Panc1 (cell line): ENCODE measurements at regions of chr5 and their contacts with region 1.

Region 1: GRCh38 chr5:179818746-179819295 is 1.9 kb upstream of the SQSTM1 start:
- DNase-seq: peak; percentile 82
- ATAC-seq: peak; percentile 73
- H3K4me3 ChIP-seq: peak overlapping the region; percentile 11 to 33; a peak in 2 of 4 replicates
- H3K27ac ChIP-seq: peak overlapping the region; percentile 99
- H3K4me1 ChIP-seq: peaks cover 41% of the 10 kb centered on the region
- H3K27me3 ChIP-seq: no peaks in the 10 kb centered on the region
- CTCF ChIP-seq: no peak

Region 2: DNA sequence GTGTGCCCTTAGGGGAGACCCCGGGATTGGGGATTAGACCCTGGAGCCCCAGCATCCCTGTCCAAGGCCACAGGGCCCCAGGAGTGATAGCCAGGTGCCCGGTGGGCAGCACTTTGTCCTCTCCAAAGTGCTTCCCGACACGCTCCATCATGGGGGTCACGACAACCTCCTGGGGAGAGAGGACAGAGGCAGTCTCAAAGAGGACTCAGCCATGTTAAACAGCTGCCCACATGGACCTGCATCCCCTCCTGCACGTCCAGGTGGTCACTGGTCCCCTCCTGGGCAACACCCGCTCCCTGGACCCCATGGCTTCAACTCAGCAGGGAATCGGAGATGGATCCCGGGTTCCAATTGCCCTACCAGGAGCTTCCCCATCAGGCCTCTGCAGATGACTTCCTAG is 175.3 kb before region 1 on chr5:
- CTCF ChIA-PET with region 1: no interaction called
- POLR2A ChIA-PET with region 1: interaction called, 11 read pairs
- in situ Hi-C with region 1: no loop called
- intact Hi-C with region 1: no loop called
- DNase-seq: no peak
- ATAC-seq: no peak
- H3K4me3 ChIP-seq: no peak overlapping the region
- H3K27ac ChIP-seq: no peak overlapping the region
- H3K4me1 ChIP-seq: no peaks in the 10 kb centered on the region
- H3K27me3 ChIP-seq: no peaks in the 10 kb centered on the region; the same call in 1 of the 2 replicates
- CTCF ChIP-seq: no peak

Region 3: GRCh38 chr5:179668391-179668790 is 150.4 kb before region 1 on chr5:
- CTCF ChIA-PET with region 1: no interaction called
- POLR2A ChIA-PET with region 1: interaction called, 10 read pairs
- in situ Hi-C with region 1: no loop called
- intact Hi-C with region 1: no loop called
- DNase-seq: no peak
- ATAC-seq: peak; percentile 79
- H3K4me3 ChIP-seq: no peak overlapping the region
- H3K27ac ChIP-seq: no peak overlapping the region
- H3K4me1 ChIP-seq: no peaks in the 10 kb centered on the region
- H3K27me3 ChIP-seq: no peaks in the 10 kb centered on the region
- CTCF ChIP-seq: no peak

Region 4: GRCh38 chr5:179801274-179802245 is 17.3 kb before region 1 on chr5:
- CTCF ChIA-PET with region 1: no interaction called
- POLR2A ChIA-PET with region 1: interaction called, 11 read pairs
- in situ Hi-C with region 1: no loop called
- intact Hi-C with region 1: no loop called
- DNase-seq: no peak
- ATAC-seq: peak; percentile 59
- H3K4me3 ChIP-seq: no peak overlapping the region
- H3K27ac ChIP-seq: peak overlapping the region; percentile 72
- H3K4me1 ChIP-seq: peaks cover 33% of the 10 kb centered on the region
- H3K27me3 ChIP-seq: no peaks in the 10 kb centered on the region
- CTCF ChIP-seq: peak; percentile 92